Psoas muscle (tissue), 8 donors: ENCODE measurements at regions of chr19 and their contacts with region 1.

Region 1: GRCh38 chr19:10580979-10581631 is 6.0 kb downstream of the AP1M2 start:
- DNase-seq: peak; percentile 86 to 94
- ATAC-seq: peak; percentile 94 to 98 (median 96)
- H3K4me3 ChIP-seq: peak overlapping the region; percentile 52
- H3K27ac ChIP-seq: no peak overlapping the region
- H3K4me1 ChIP-seq: peaks cover 5% of the 10 kb centered on the region
- H3K27me3 ChIP-seq: no peaks in the 10 kb centered on the region
- CTCF ChIP-seq: peak; percentile 99

Region 2: DNA sequence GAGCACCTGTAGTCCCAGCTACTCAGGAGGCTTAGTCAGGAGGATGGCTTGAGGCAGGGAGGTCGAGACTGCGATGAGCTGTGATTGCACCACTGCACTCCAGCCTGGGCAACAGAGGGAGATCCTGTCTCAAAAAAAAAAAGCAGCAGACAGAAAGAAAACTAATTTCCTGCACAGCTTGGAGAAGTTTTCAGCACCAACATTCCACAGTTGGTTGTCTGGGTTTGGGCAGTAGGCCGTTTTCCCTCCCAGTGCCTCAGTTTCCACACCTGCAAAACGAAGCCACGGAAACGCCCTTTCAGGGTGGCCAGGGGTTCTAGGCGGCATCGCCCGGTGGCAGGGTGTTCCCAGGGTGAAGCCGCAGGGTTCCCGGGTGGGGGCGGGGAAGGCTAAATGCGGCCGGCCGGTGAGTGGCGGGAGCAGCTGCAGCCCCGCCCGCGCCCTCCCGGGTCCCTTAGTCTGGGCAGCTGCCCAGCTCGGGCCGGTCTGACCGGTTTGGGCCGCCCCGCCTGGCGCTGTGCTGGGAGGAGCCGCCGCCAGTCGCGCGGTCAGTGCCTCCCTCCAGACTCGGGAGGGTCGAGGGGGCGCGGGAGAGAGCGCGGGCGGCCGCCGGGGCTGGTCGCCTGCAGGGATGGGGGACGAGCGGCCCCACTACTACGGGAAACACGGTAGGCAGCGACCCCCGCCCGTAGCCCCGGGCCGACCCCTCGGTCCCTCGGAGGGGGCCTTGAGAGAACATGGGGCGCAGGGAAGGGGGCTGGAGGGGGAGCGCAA is 44.1 kb after region 1 on chr19 and contains the start of gene SLC44A2:
- intact Hi-C with region 1: no loop called
- DNase-seq: peak; percentile 90 to 95
- ATAC-seq: peak; percentile 96 to 99 (median 98)
- H3K4me3 ChIP-seq: peak within 1 kb of the TSS; percentile 93
- H3K27ac ChIP-seq: peak within 1 kb of the TSS; percentile 92
- H3K4me1 ChIP-seq: peaks cover 29% of the 10 kb centered on the region
- H3K27me3 ChIP-seq: no peaks in the 10 kb centered on the region
- CTCF ChIP-seq: no peak
- total RNA-seq, gene SLC44A2: 73.8 to 104 (median 83.8) TPM

Region 3: GRCh38 chr19:10644260-10645007 is 63.3 kb after region 1 on chr19:
- intact Hi-C with region 1: loop called (anchors 1 kb)
- DNase-seq: peak; percentile 87 to 93
- ATAC-seq: peak; percentile 93 to 97 (median 94)
- H3K4me3 ChIP-seq: peak overlapping the region; percentile 4
- H3K27ac ChIP-seq: peak overlapping the region; percentile 46
- H3K4me1 ChIP-seq: peaks cover 8% of the 10 kb centered on the region
- H3K27me3 ChIP-seq: no peaks in the 10 kb centered on the region
- CTCF ChIP-seq: peak; percentile 89

Region 4: DNA sequence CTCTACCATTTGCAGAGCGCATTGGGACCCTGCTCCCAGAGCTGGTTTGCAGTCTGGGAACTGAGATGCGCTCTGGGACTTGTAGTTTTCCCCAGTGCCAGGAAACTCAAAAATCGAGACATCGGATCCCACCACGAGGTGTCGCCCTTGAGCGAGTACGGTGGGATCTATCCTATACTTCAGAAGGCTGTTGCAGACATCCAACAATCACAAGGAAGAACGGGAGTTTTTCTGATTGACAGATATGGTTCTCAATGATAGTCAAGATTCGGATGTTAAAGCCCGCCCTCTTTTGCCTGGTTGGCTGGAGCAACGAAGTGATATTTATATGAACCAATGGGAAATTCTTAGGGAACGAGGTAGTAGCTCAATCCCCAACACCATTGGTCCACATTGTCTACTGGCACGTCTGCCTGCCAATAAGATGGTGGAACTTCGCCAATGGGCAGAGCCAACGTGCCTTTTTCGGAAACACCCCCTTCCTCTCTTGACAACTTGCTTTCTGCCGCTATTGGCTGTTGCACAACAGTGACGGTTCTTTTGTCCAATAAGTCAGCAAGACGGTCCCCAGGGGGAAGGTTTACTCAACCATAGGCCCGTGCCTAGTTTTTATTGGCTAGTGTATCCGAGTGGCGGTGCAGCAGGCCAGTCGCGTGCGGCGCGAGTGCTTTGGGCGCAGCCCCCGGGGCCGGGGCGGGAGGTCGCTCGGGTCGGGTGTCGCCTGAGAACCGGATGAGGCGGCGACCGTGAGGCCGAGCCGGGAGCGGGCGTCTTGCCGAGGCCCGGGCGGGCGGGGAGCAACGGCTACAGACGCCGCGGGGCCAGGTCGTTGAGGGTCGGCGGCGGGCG is 136.5 kb after region 1 on chr19 and contains the start of gene DNM2:
- intact Hi-C with region 1: no loop called
- DNase-seq: peak; percentile 98 to 99
- ATAC-seq: peak; percentile 90 to 94 (median 92)
- H3K4me3 ChIP-seq: peak within 1 kb of the TSS; percentile 95
- H3K27ac ChIP-seq: peak within 1 kb of the TSS; percentile 96
- H3K4me1 ChIP-seq: peaks cover 27% of the 10 kb centered on the region
- H3K27me3 ChIP-seq: no peaks in the 10 kb centered on the region
- CTCF ChIP-seq: peak; percentile 78
- total RNA-seq, gene DNM2: 117 to 143 (median 130) TPM